CD8-positive, alpha-beta memory T cell (primary cell): ENCODE measurements at regions of chr10 and their contacts with region 1.

Region 1: GRCh38 chr10:91298224-91298871 is 77.9 kb downstream of the PCGF5 start:
- DNase-seq: peak; percentile 58 to 85 (median 70)
- H3K4me3 ChIP-seq: peak overlapping the region; percentile 43
- H3K4me3 Mint-ChIP-seq: peak overlapping the region; percentile 14 to 88 (median 65)
- H3K27ac ChIP-seq: no peak overlapping the region
- H3K27ac Mint-ChIP-seq: peak overlapping the region in 2 of 8 donors; percentile 30 to 37
- H3K4me1 ChIP-seq: peaks cover 13% of the 10 kb centered on the region
- H3K4me1 Mint-ChIP-seq: peaks cover 9 to 16% (median 10%) of the 10 kb centered on the region in 3 donors
- H3K27me3 ChIP-seq: peaks cover 6% of the 10 kb centered on the region
- H3K27me3 Mint-ChIP-seq: peaks cover 8 to 10% of the 10 kb centered on the region in 2 donors

Region 2: GRCh38 chr10:91006001-91006751 is 292.2 kb before region 1 on chr10:
- CTCF ChIA-PET with region 1: interaction called, 16 read pairs
- POLR2A ChIA-PET with region 1: no interaction called
- DNase-seq: peak; percentile 37 to 71 (median 52)
- H3K4me3 ChIP-seq: no peak overlapping the region
- H3K4me3 Mint-ChIP-seq: peak overlapping the region; percentile 0 to 87 (median 71)
- H3K27ac ChIP-seq: no peak overlapping the region
- H3K27ac Mint-ChIP-seq: peak overlapping the region in 6 of 8 donors; percentile 62 to 87 (median 76)
- H3K4me1 ChIP-seq: peaks cover 17% of the 10 kb centered on the region
- H3K4me1 Mint-ChIP-seq: peaks cover 18 to 27% (median 24%) of the 10 kb centered on the region in 3 donors
- H3K27me3 ChIP-seq: no peaks in the 10 kb centered on the region
- H3K27me3 Mint-ChIP-seq: peaks cover 2 to 3% of the 10 kb centered on the region in 2 donors

Region 3: DNA sequence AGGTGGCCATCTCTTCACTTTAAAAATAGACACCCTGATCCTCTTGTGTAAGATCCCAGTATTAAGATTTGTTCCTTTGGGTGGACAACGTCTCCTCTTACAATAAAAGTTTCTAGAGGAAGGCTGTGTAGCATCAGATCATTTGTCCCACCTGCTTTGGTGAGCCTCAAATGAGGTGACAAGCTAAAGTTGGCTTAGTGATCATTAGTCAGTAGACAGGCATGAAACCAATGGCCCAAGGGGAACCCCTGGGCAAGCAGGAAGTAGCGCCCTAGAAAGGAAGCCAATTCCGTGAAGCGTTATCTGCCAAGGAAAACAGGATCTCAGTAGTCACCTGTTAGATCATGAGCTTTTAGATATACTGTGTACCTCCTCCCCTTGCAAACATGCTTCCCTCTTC is 11.1 kb before region 1 on chr10:
- CTCF ChIA-PET with region 1: interaction called, 23 read pairs
- POLR2A ChIA-PET with region 1: no interaction called
- DNase-seq: no peak
- H3K4me3 ChIP-seq: no peak overlapping the region
- H3K4me3 Mint-ChIP-seq: no peak overlapping the region
- H3K27ac ChIP-seq: no peak overlapping the region
- H3K27ac Mint-ChIP-seq: no peak overlapping the region
- H3K4me1 ChIP-seq: no peaks in the 10 kb centered on the region
- H3K4me1 Mint-ChIP-seq: no peaks in the 10 kb centered on the region
- H3K27me3 ChIP-seq: no peaks in the 10 kb centered on the region
- H3K27me3 Mint-ChIP-seq: no peaks in the 10 kb centered on the region

Region 4: DNA sequence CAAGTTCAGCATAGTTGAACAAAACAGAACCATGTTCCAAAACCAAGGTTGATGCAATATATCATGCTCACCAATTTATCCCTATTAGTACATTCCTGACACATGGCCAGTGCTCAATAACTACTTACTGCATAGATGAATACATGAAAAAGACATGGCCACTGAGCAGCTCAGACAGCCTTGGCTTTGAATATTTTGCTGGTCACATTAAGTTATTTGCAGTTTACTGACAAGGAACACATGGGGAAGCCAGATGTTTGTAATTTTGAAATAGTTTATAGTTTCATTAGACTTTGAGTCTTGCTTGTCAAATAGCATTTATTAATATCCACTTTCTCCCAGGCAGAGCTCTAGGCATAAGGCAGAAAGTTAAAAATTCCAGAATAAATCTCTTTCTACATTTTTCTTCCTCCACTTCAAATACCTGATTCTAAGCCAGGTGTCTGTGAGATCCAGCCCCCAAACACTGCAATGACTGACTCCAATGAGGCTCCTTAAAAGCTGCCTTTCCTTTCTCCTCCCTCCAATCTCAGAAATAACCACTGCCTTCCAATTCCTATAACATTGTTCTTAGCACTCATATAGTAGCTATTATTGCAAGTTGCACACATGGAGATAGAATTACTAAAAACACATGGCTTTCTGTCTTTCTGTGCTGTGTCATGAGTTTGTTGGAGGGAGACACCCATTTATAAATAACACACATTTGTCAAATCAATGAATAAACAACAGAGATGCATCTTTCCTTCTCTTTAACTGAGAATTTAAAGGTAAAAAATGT is 13.4 kb after region 1 on chr10:
- CTCF ChIA-PET with region 1: interaction called, 13 read pairs
- POLR2A ChIA-PET with region 1: no interaction called
- DNase-seq: no peak
- H3K4me3 ChIP-seq: no peak overlapping the region
- H3K4me3 Mint-ChIP-seq: no peak overlapping the region
- H3K27ac ChIP-seq: no peak overlapping the region
- H3K27ac Mint-ChIP-seq: no peak overlapping the region
- H3K4me1 ChIP-seq: no peaks in the 10 kb centered on the region
- H3K4me1 Mint-ChIP-seq: no peaks in the 10 kb centered on the region
- H3K27me3 ChIP-seq: no peaks in the 10 kb centered on the region
- H3K27me3 Mint-ChIP-seq: peaks cover 3 to 46% of the 10 kb centered on the region in 2 donors

Region 5: GRCh38 chr10:91354166-91355075 is 56.1 kb after region 1 on chr10:
- CTCF ChIA-PET with region 1: no interaction called
- POLR2A ChIA-PET with region 1: no interaction called
- DNase-seq: no peak
- H3K4me3 ChIP-seq: no peak overlapping the region
- H3K4me3 Mint-ChIP-seq: no peak overlapping the region
- H3K27ac ChIP-seq: no peak overlapping the region
- H3K27ac Mint-ChIP-seq: no peak overlapping the region
- H3K4me1 ChIP-seq: no peaks in the 10 kb centered on the region
- H3K4me1 Mint-ChIP-seq: no peaks in the 10 kb centered on the region
- H3K27me3 ChIP-seq: no peaks in the 10 kb centered on the region
- H3K27me3 Mint-ChIP-seq: peaks cover 15 to 41% of the 10 kb centered on the region in 2 donors

Region 6: GRCh38 chr10:91632671-91633550 is 334.6 kb after region 1 on chr10 and contains the start of gene PPP1R3C:
- CTCF ChIA-PET with region 1: interaction called, 69 read pairs
- POLR2A ChIA-PET with region 1: no interaction called
- DNase-seq: peak in 2 of 5 donors; percentile 10 to 27
- H3K4me3 ChIP-seq: peak within 1 kb of the TSS; percentile 40
- H3K4me3 Mint-ChIP-seq: peak within 1 kb of the TSS in 6 of 7 donors; percentile 31 to 82 (median 58)
- H3K27ac ChIP-seq: no peak within 1 kb of the TSS
- H3K27ac Mint-ChIP-seq: no peak within 1 kb of the TSS
- H3K4me1 ChIP-seq: no peaks in the 10 kb centered on the region
- H3K4me1 Mint-ChIP-seq: peaks cover 6 to 14% (median 8%) of the 10 kb centered on the region in 3 donors
- H3K27me3 ChIP-seq: peaks cover 10% of the 10 kb centered on the region
- H3K27me3 Mint-ChIP-seq: peaks cover 35 to 89% of the 10 kb centered on the region in 2 donors
- total RNA-seq, gene PPP1R3C: not detected